HCT116 (cell line): ENCODE measurements at regions of chr1 and their contacts with region 1.

Region 1: DNA sequence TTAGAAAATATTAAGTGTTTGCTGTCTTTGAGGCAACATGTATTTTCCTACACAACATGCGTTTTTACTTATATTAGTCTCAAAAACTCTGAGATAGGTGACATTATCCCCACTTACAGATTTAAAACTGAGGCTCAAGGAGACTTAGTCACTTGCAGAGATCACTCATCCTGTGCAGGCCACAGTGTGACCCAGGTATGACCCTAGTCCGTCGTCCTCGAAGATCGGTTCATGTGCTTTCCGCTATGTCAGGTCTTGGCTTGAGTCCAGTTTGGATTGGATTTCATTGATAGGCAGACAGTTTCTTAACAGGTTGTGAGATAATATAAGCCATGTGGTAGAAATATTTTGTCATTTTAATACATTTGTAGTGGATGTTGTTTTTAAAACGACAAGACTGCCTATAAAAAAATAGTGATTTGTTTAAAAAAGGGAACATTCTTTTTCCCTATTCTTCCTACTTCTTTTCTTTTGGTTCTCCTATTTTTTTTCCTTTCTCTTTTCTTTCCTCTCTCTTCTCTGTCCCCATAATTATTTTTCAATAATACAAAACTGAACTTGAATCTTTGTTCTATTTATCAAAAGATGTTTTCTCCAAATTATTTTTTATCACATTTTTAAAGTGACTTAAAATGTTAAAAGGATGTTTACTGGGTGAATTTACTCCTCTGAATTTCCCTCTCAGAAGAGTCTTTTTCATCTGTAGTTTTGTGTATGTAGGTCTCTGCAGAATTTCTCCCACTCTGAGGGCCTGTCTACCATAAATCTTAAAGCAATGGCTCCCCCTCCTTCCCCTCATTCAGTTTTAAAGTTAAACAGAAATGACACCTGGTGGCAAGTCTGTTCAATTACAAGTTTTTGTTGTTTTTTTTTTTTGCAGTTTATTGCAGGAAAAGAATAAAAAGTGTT is 81.8 kb downstream of the PHTF1 start:
- DNase-seq: peak; percentile 44
- ATAC-seq: peak; percentile 67
- H3K4me3 ChIP-seq: no peak overlapping the region
- H3K27ac ChIP-seq: no peak overlapping the region
- H3K4me1 ChIP-seq: peaks cover 5 to 10% of the 10 kb centered on the region in 2 experiments; a peak in 3 of 4 replicates
- H3K27me3 ChIP-seq: no peaks in the 10 kb centered on the region
- CTCF ChIP-seq: peak; percentile 42 to 92 (median 66)
- POLR2A ChIP-seq: no peak
- RAD21 ChIP-seq: peak; percentile 89

Region 2: DNA sequence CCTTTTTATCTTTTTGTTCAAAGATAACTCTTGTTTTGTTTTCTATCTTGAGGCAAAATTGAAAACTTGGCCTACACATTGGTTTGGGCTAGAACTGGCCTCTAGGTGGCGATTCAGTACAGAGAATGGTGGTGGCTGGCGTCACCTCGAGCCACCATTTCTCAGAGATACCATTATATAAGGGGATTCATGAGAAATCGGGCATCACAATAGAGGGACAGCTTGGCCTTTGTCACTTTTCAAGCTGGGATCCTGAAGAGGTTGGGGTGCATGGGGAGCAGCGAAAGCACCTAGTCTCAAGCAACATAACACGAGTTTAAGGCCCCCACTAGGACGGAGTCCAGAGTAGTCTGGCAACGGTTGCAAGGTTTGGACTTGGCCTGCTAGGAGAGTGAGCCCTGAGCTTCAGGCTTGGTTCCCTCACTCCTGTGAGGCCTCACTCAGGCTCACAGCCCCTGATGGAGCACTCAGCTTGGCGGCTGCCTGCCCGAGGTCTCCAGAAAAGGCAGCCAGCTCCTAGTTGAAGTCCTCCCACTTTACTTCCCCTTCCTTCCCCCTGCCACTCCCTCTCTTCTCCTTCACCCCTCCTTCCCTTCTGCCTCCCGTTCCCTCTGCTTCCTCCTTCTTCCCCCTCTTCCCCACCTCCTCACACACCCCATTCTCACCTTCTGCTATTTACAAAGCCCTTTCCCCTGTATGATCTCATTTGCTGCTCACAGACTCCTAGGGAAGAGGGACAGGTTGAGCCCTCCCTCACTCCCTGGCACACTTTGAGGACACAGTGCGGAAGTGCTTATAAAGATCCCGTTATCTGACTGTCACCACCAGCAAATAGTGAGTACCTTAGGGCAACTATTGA is 536.7 kb before region 1 on chr1:
- CTCF ChIA-PET with region 1: interaction called, 13 read pairs
- POLR2A ChIA-PET with region 1: no interaction called
- RAD21 ChIA-PET with region 1: no interaction called
- intact Hi-C with region 1: loop called (anchors 1 kb)
- DNase-seq: peak; percentile 43
- ATAC-seq: peak; percentile 94
- H3K4me3 ChIP-seq: no peak overlapping the region
- H3K27ac ChIP-seq: no peak overlapping the region
- H3K4me1 ChIP-seq: peaks cover 0 to 14% of the 10 kb centered on the region in 2 experiments; a peak in 2 of 4 replicates
- H3K27me3 ChIP-seq: no peaks in the 10 kb centered on the region
- CTCF ChIP-seq: peak; percentile 83 to 97 (median 85)
- POLR2A ChIP-seq: no peak
- RAD21 ChIP-seq: peak; percentile 96

Region 3: DNA sequence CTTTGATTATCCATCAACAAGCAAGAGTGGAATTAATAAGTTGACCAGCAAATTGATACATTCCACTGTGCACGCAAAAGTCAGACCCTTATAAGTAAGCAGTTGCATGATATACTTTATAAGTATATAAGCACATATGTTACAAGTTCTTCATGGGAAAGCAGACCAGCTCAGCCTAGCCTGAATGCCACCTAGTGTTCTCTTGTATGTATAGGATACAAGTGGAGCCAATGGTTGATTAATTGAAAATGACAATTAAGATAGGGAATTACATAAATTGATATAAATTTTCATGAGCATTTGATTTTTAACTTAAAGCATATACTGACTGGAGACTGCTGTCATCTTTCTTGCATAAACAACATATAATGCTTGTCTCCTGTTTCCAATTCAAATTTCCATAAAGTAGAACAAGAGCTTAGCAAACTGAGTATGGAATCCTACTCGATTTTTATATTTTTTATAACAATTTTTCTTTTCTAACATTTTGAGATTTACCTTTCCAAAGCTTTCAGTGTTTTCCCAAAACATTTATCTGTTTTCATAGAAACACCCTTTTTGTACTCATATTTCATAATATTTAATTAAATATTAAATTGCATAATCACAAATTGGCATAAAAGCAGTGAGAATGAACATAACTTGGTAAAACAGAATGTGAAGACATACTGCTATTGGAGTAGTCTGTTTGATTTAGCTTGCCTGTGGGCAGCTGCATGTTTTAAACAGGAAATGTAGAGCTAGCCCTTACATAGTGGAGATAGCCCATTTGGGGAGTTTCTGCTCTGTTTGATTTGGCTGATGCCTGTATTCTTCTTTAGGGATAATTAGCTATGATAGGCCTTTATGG is 224.4 kb before region 1 on chr1:
- CTCF ChIA-PET with region 1: no interaction called
- POLR2A ChIA-PET with region 1: no interaction called
- RAD21 ChIA-PET with region 1: no interaction called
- intact Hi-C with region 1: loop called (anchors 10 kb)
- DNase-seq: peak; percentile 39
- ATAC-seq: 0 out of 2 replicates have a peak, but pooled peaks have one; percentile 55
- H3K4me3 ChIP-seq: no peak overlapping the region
- H3K27ac ChIP-seq: no peak overlapping the region
- H3K4me1 ChIP-seq: peaks cover 18 to 28% of the 10 kb centered on the region in 2 experiments
- H3K27me3 ChIP-seq: no peaks in the 10 kb centered on the region
- CTCF ChIP-seq: peak; percentile 49 to 65 (median 60); a peak in 5 of 6 replicates
- POLR2A ChIP-seq: no peak
- RAD21 ChIP-seq: peak; percentile 67